ENCODE measurements at regions of chr13 and their contacts with region 1.

Region 1: DNA sequence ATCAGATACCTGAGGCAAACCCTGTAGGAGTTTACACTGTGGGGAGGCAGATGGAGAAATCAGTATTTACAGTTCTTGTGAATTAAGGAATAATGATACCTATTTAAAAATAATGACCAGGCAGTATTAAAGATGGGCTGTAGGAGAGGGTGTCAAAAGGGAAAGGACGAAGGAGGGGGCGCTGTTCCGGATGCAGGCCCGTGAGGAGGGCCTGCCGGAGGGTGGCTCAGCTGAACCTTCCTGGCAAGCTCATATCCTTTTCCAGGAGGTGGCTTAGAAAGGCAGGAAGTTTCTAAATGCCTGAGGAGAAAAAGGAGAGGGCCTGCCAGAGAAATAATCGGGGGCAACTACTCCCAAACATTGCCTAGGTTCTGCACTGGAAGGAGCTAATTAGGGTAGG is 46.6 kb downstream of the MBNL2 start:
- DNase-seq: peak; percentile 20
- ATAC-seq: peak; percentile 54
- H3K4me3 Mint-ChIP-seq: no peak overlapping the region
- H3K27ac Mint-ChIP-seq: peak overlapping the region; percentile 89; the same call in 1 of the 2 replicates
- H3K4me1 Mint-ChIP-seq: peaks cover 41% of the 10 kb centered on the region
- H3K27me3 Mint-ChIP-seq: no peaks in the 10 kb centered on the region; the same call in 1 of the 2 replicates
- CTCF ChIP-seq: no peak

Region 2: DNA sequence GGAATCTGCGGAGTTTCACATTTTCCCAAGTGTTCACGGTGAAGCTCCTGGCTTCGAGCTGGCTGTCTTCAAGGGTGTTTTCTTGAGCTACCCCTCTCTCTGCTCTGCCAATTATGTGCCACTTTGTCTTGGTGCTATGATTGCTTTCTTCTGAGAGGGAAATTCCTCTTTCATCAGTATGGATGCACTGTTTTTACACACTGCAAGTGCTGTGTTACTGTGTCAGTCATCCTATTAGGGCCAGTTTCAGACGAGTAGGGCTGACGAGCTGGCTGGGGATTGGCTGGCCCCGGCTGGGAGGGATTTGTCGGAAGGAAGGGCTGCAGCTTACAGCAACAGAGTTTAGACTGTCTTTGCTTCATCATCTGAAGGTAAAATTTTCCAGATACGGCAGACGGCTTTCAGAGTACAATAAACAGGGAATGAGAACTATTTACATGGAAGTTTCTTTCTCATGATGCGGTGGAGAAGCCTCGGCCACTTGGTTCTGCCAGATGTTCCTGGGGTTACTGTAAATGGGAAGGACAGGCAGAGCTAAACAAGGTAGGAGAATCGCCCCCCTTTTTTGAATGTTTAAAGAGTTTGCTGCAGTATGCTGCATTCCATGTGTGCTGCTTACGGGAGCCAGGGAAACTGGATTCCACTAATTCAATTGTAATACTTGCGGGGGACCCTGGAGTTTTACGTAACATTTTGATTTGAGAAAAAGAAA is 46.6 kb before region 1 on chr13 and contains the start of gene MBNL2:
- CTCF ChIA-PET with region 1: interaction called, 11 read pairs
- POLR2A ChIA-PET with region 1: no interaction called
- DNase-seq: peak; percentile 63
- ATAC-seq: peak; percentile 96
- H3K4me3 Mint-ChIP-seq: peak within 1 kb of the TSS; percentile 78
- H3K27ac Mint-ChIP-seq: peak within 1 kb of the TSS; percentile 83
- H3K4me1 Mint-ChIP-seq: peaks cover 35% of the 10 kb centered on the region
- H3K27me3 Mint-ChIP-seq: peaks cover 93% of the 10 kb centered on the region
- CTCF ChIP-seq: no peak
- total RNA-seq, gene MBNL2: 0.85 to 1.9 TPM (median 1.7 TPM) in 3 replicates

Region 3: GRCh38 chr13:97257800-97258799 is 10.7 kb before region 1 on chr13:
- CTCF ChIA-PET with region 1: interaction called, 26 read pairs
- POLR2A ChIA-PET with region 1: no interaction called
- DNase-seq: peak; percentile 55
- ATAC-seq: peak; percentile 92
- H3K4me3 Mint-ChIP-seq: no peak overlapping the region
- H3K27ac Mint-ChIP-seq: no peak overlapping the region
- H3K4me1 Mint-ChIP-seq: peaks cover 32% of the 10 kb centered on the region
- H3K27me3 Mint-ChIP-seq: peaks cover 20% of the 10 kb centered on the region
- CTCF ChIP-seq: no peak

Region 4: DNA sequence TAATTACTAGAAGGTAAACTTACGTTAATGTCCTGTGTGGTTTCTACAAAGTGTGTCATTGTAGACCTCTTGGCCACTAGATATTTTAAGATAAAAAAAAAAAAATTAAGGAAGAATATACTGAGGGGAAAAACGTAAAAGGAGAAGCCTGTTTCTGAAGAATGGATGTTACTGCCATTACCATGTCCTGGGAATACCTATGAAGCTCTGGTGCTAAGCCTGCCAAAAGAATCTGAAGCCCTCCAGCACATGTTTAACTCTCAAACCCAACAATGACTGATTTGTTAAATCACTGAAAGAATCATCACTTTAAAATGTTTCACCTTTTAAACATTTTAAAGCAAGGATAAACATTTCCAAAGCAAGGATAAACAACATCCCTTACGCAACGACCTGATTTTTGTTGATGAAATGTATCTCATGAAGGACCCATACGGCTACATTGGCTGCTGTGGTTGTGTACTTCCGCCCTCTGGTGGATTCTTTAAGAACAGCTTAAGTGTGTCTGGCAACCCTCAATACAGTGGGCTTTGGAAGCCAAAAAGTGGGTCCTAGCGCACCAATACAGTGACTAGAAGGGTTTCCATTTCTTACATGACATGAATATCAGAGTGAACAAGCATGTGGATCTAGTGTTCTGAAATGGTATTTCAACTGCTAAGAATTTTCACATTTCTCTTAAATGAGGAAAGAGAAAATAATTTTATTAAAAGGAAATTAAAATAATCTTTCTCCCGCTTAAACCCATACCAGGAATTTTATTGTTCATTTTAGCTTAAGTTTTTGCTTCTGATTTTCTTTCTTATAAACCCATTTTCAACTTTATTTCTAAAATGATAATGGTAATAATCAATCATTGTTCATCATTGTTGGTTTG is 90.6 kb after region 1 on chr13:
- CTCF ChIA-PET with region 1: interaction called, 13 read pairs
- POLR2A ChIA-PET with region 1: no interaction called
- DNase-seq: peak; percentile 40
- ATAC-seq: peak; percentile 99
- H3K4me3 Mint-ChIP-seq: no peak overlapping the region
- H3K27ac Mint-ChIP-seq: no peak overlapping the region
- H3K4me1 Mint-ChIP-seq: peaks cover 9% of the 10 kb centered on the region; the same call in 1 of the 2 replicates
- H3K27me3 Mint-ChIP-seq: no peaks in the 10 kb centered on the region
- CTCF ChIP-seq: peak; percentile 76

Region 5: DNA sequence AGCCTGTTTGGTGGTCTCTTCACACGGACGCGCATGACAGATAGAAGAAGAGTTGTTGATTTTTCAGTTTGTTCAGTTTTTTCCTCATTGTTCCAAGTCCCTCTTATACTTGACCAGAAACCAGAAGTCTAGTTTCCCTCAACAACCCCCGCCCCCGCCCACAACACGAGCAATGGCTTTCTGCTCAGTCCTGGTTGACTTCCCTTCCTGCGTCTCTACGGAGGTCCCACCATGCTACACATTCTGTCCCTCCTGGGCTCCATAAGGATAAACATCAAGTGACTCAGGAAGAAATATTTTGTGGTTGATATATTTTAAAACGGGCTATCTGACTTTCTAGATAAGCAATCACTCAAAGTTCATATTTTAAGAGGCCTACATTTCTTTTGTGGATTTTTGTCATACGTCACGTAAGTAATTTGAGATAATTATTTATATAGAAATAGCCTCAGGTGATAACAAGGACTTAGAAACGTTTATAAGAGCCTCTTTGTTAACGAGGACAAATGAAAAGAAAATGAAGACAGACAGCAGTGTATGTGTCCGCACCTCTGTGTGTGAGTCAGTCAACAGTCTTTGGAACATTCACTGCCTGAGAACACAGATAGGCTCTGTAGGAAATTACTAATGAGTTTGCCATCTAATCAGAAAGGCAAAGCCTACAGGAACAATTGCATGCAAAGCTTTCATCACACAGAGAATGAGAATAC is 379.6 kb after region 1 on chr13:
- CTCF ChIA-PET with region 1: no interaction called
- POLR2A ChIA-PET with region 1: no interaction called
- DNase-seq: no peak
- ATAC-seq: no peak
- H3K4me3 Mint-ChIP-seq: no peak overlapping the region
- H3K27ac Mint-ChIP-seq: peak overlapping the region; percentile 75; the same call in 1 of the 2 replicates
- H3K4me1 Mint-ChIP-seq: peaks cover 30% of the 10 kb centered on the region
- H3K27me3 Mint-ChIP-seq: no peaks in the 10 kb centered on the region; the same call in 1 of the 2 replicates
- CTCF ChIP-seq: no peak